Activated T-helper 2 cell treated with anti-CD3 and anti-CD28 coated beads, Interferon-gamma antibody, Interleukin-2, Interleukin-4, amounts not matched to agents 10 μg/mL and 5 μg/mL and 100 μg/mL, durations not matched to agents 14 hours and 24 hours and 36 hours (primary cell): ENCODE measurements at regions of chr15 and their contacts with region 1.

Region 1: DNA sequence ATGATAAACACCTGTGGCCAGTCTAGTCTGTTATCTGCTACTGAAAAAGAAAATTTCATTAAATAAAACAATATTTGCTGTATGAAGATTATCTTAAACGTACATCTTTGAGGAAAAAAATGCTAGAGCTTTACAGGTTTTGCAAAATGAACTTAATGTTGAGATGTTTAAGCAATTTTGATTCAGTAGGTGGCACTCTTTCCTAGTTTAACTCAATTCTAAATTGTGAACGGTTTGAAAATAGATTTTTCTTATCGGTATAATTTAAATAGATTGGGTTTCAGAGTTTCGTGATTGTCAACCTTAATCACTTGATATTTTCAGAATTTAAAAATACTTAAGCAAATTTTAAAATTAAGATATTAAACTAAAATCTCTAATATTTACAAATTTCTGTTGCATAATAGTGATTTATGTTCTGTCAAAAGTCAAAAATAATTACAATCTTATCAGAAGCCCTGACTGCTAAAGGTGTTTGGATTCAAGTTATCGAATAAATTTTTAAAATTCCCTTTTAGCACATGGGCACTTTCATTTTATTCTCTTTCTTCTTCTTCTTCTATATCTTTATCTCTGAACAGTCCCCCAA is 7.0 kb upstream of the RNF111 start:
- DNase-seq: no peak
- H3K4me3 Mint-ChIP-seq: no peak overlapping the region
- H3K27ac Mint-ChIP-seq: peak overlapping the region; percentile 46
- H3K4me1 Mint-ChIP-seq: peaks cover 34% of the 10 kb centered on the region
- H3K27me3 Mint-ChIP-seq: peaks cover 10% of the 10 kb centered on the region

Region 2: GRCh38 chr15:58839485-58839884 is 141.0 kb before region 1 on chr15:
- intact Hi-C with region 1: no loop called
- DNase-seq: no peak
- H3K4me3 Mint-ChIP-seq: no peak overlapping the region
- H3K27ac Mint-ChIP-seq: no peak overlapping the region
- H3K4me1 Mint-ChIP-seq: peaks cover 4% of the 10 kb centered on the region
- H3K27me3 Mint-ChIP-seq: no peaks in the 10 kb centered on the region

Region 3: DNA sequence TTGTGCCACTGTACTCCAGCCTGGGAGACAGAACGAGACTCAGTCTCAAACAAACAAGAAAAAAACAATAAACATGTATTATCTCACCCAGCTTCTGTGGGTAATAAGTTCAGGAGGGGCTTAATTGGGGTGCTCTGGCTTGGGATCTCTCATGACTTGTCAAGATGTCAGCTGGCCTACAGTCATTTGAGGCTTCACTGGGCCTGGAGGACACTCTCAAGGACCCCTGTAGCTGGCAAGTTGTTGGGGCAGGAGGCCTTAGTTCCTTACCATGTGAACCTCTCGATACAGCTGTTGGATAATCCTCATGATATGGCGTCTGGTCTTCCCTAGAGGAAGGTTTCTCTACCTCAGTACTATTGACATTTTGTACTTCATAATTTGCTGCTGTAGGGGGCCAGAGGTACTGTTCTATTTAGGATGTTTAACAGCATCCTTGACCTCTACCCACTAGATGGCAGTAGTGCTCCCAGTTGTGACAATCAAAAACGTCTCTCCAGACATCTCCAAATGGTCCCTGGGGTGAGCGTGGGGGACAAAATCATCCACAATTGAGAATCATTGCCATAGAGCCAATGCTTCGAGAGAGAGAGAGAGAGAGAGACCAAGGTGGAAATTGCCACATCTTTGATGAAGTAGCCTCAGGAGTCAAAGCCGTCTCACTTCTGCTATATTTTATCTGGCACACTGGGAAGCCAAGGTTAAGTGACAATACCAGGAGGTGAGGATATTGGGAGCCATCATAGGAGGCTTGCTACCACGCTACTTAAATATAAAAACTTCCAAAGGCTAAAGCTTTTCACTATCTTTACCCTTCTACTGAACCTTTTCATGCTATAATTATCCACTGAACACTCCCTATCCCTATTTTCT is 23.1 kb before region 1 on chr15:
- intact Hi-C with region 1: loop called (anchors 2 kb)
- DNase-seq: peak; percentile 50
- H3K4me3 Mint-ChIP-seq: no peak overlapping the region
- H3K27ac Mint-ChIP-seq: no peak overlapping the region
- H3K4me1 Mint-ChIP-seq: peaks cover 12% of the 10 kb centered on the region
- H3K27me3 Mint-ChIP-seq: peaks cover 6% of the 10 kb centered on the region

Region 4: GRCh38 chr15:59039225-59039624 is 58.8 kb after region 1 on chr15:
- intact Hi-C with region 1: loop called (anchors 2 kb)
- DNase-seq: no peak
- H3K4me3 Mint-ChIP-seq: no peak overlapping the region
- H3K27ac Mint-ChIP-seq: peak overlapping the region; percentile 72
- H3K4me1 Mint-ChIP-seq: peaks cover 35% of the 10 kb centered on the region
- H3K27me3 Mint-ChIP-seq: no peaks in the 10 kb centered on the region

Region 5: DNA sequence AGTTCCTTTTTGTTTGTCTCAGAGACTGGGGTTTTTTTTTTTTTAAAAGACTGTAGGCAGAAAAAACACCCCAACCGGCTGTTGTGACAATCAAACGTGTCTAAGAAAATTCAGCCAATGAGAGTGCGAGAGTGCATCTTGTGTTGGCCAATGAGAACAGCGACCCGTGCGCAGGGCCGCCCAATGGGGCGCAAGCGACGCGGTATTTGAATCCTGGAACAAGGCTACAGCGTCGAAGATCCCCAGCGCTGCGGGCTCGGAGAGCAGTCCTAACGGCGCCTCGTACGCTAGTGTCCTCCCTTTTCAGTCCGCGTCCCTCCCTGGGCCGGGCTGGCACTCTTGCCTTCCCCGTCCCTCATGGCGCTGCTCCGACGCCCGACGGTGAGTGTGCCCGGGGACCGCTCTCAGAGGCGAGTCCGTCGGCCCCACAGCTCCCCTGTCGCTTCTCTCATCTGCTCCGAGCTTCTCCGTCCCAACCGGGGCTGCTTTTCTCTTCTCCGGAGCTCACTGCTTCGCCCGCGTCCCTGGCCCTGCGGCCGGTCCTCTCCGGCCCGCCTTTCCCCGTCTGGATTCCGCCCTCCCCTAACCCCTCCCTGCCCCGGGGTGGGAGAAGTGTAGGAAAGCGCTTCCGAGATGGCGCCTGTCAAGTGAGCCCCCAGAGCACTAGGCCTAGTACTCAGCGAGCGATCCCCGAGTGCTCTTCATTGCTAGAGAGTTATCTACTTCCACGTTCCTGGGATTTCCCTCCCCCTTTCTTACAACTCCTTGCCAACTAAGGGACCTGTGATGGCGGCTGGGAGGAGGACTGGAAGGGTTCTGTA is 124.7 kb after region 1 on chr15 and contains the start of gene CCNB2:
- intact Hi-C with region 1: loop called (anchors 1 kb)
- DNase-seq: peak; percentile 86
- H3K4me3 Mint-ChIP-seq: peak within 1 kb of the TSS; percentile 96
- H3K27ac Mint-ChIP-seq: peak within 1 kb of the TSS; percentile 99
- H3K4me1 Mint-ChIP-seq: peaks cover 22% of the 10 kb centered on the region
- H3K27me3 Mint-ChIP-seq: no peaks in the 10 kb centered on the region
- total RNA-seq, gene CCNB2: 57.5 and 59.2 TPM in 2 replicates